ENCODE measurements at regions of chr16 and their contacts with region 1.

Region 1: GRCh38 chr16:58629572-58630104 is at the start of gene CNOT1:
- DNase-seq: peak; percentile 98
- total RNA-seq, gene CNOT1: 85.6 TPM

Region 2: GRCh38 chr16:58515125-58515870 is 114.3 kb before region 1 on chr16 and contains the start of gene SETD6:
- intact Hi-C with region 1: loop called (anchors 5 kb)
- DNase-seq: peak; percentile 94
- total RNA-seq, gene SETD6: 12.4 TPM

Region 3: GRCh38 chr16:58563235-58563634 is 66.4 kb before region 1 on chr16:
- intact Hi-C with region 1: loop called (anchors 10 kb)
- DNase-seq: no peak